CD8-positive, alpha-beta T cell (primary cell): ENCODE measurements at regions of chr2 and their contacts with region 1.

Region 1: DNA sequence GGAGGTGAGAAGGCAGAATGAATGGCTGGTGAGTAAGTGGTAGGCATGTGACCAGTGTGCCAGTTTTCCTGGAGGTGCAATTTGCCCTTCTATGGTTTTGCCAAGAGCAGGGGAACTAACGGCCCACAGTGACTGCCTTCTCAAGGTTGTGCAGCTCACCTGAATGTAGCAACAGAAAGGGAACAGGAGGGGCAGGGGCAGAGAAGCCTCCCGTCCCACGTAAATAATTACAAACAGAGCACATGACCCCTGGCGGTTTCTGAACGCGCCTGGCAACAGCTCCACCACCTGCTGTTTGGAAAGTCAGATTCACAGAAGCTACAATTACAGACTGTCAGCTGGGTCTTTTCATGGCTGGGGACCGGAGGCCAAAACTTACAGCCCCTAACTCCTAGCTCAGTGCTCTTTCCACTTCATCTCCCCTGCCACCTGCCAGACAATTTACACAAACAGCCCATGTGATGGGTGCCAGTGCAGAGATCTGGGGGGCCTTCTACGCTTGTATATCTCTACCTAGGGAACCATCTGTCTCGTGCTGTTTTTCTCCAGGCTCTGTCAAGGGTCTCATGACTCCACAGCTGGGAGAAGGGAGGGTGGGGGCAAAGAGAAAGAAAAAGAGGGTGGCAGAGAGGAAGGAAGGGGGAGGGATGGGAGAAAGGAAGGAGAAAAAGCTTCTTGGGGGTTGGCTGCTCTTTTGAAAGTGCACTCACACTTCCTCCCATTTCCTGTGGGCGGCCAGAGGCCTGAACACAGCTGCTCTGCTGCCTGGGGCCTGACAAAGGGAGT is 69.6 kb downstream of the POLR1A start:
- DNase-seq: peak; percentile 42 to 91 (median 72)
- ATAC-seq: peak; percentile 50
- H3K4me3 ChIP-seq: peak overlapping the region; percentile 4 to 41
- H3K4me3 Mint-ChIP-seq: peak overlapping the region; percentile 79
- H3K27ac ChIP-seq: peak overlapping the region; percentile 87 to 93
- H3K27ac Mint-ChIP-seq: peak overlapping the region; percentile 100
- H3K4me1 ChIP-seq: peaks cover 83% of the 10 kb centered on the region
- H3K4me1 Mint-ChIP-seq: peaks cover 86% of the 10 kb centered on the region
- H3K27me3 ChIP-seq: no peaks in the 10 kb centered on the region
- H3K27me3 Mint-ChIP-seq: no peaks in the 10 kb centered on the region
- CTCF ChIP-seq: peak; percentile 27

Region 2: DNA sequence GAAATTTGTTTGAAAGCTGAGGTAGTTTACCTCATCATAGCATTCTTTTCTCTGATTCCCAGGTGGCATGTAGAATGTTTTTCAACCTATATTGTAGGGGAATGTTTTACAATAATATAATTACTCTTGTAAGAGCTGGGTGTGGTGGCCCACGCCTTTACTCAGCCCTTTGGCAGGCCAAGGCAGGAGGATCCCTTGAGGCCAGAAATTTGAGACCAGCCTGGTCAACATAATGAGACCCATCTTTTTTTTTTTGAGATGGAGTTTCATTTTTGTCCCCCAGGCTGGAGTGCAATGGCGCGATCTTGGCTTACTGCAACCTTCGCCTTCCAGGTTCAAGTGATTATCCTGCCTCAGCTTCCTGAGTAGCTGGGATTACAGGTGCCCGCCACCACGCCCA is 416.5 kb before region 1 on chr2:
- CTCF ChIA-PET with region 1: no interaction called
- POLR2A ChIA-PET with region 1: no interaction called
- intact Hi-C with region 1: loop called in 1 of 2 experiments (anchors 5 kb)
- DNase-seq: no peak
- ATAC-seq: no peak
- H3K4me3 ChIP-seq: no peak overlapping the region
- H3K4me3 Mint-ChIP-seq: no peak overlapping the region
- H3K27ac ChIP-seq: no peak overlapping the region
- H3K27ac Mint-ChIP-seq: no peak overlapping the region
- H3K4me1 ChIP-seq: peaks cover 20% of the 10 kb centered on the region
- H3K4me1 Mint-ChIP-seq: peaks cover 32% of the 10 kb centered on the region
- H3K27me3 ChIP-seq: no peaks in the 10 kb centered on the region
- H3K27me3 Mint-ChIP-seq: no peaks in the 10 kb centered on the region
- CTCF ChIP-seq: no peak

Region 3: DNA sequence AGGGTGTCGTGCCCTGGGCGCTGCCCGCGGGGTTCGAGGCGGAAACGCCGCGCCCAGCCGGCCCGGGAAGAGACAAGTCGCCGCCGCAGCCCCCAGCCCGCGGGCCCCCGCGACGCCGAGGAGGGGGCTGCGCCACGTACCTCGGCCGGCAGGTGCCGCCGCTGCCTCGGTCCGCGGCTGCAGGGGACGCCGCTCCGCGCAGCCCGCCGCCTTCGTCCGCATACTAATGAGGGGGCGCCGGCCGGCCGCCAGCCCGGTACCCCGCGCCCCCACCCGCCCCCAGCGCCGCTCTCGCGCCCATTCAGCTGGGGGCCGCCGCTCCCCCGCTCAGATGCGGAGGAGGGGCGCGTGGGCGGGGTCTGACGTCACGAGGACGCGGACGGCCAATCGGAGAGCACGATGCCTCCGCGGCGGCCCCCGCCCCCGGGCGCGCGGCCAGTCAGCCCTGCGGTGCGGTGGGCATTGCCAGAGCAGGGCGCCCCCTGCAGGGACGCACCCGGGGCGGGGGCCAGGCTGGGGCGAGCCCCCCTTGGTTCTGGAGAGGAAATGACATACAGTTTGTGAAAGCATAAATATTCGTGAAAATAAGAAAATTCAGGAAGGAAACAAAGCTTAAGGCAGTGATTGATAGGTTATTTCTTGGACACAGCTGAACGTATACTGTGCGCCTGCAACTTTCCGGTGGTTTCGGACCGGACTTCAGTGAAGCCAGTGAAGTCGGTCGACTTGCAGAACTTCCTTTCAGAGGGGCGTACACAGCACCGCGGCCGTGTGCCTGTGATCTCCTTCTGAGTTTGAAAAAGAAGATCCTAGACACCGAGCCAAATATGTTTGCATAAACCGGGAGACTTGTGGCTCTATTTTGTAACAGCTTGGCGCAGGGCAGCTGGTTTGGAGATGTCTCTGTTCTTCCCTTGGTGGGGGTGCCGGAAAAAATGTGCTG is 147.1 kb before region 1 on chr2 and contains the start of gene ST3GAL5:
- CTCF ChIA-PET with region 1: interaction called, 66 read pairs
- POLR2A ChIA-PET with region 1: interaction called, 28 read pairs
- intact Hi-C with region 1: loop called (anchors 1 kb)
- DNase-seq: peak; percentile 84 to 98 (median 95)
- ATAC-seq: peak; percentile 85
- H3K4me3 ChIP-seq: peak within 1 kb of the TSS; percentile 89 to 96
- H3K4me3 Mint-ChIP-seq: peak within 1 kb of the TSS; percentile 95
- H3K27ac ChIP-seq: peak within 1 kb of the TSS; percentile 83 to 84
- H3K27ac Mint-ChIP-seq: peak within 1 kb of the TSS; percentile 97
- H3K4me1 ChIP-seq: peaks cover 59% of the 10 kb centered on the region
- H3K4me1 Mint-ChIP-seq: peaks cover 77% of the 10 kb centered on the region
- H3K27me3 ChIP-seq: no peaks in the 10 kb centered on the region
- H3K27me3 Mint-ChIP-seq: no peaks in the 10 kb centered on the region
- CTCF ChIP-seq: peak; percentile 71
- total RNA-seq, gene ST3GAL5: 110 to 115 TPM

Region 4: DNA sequence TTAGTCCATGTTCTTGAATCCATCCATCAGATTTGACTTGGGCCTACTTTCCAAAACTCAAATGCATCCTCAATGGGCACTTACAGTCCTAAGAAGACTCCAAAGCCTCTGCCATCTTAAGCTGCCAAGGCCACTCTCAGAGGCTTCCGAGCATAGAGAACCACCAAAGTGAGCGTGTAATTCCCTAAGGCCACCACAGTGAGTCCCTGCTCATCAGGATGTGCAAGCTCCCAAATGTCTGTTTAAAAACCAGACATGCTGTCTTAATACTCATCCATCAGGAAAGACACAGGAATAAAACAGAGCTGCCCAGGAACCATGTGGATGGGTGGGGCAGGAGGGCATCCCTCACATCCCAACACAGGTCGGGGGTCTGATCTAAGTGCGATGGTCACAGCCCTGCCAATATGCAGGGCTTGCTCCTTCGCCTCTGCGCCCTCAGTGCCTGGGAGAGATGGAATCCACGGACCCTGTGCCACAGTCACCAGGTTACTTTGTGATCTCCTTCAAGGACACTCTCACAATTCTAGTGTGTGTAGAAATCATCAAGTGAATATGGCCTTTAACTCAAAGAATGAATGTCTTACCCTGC is 10.8 kb before region 1 on chr2:
- CTCF ChIA-PET with region 1: interaction called, 13 read pairs
- POLR2A ChIA-PET with region 1: interaction called, 6 read pairs
- intact Hi-C with region 1: no loop called
- DNase-seq: peak in 1 of 9 experiments; percentile 30
- ATAC-seq: peak; percentile 31
- H3K4me3 ChIP-seq: no peak overlapping the region
- H3K4me3 Mint-ChIP-seq: no peak overlapping the region
- H3K27ac ChIP-seq: no peak overlapping the region
- H3K27ac Mint-ChIP-seq: peak overlapping the region; percentile 52
- H3K4me1 ChIP-seq: no peaks in the 10 kb centered on the region
- H3K4me1 Mint-ChIP-seq: no peaks in the 10 kb centered on the region
- H3K27me3 ChIP-seq: no peaks in the 10 kb centered on the region
- H3K27me3 Mint-ChIP-seq: no peaks in the 10 kb centered on the region
- CTCF ChIP-seq: no peak

Region 5: DNA sequence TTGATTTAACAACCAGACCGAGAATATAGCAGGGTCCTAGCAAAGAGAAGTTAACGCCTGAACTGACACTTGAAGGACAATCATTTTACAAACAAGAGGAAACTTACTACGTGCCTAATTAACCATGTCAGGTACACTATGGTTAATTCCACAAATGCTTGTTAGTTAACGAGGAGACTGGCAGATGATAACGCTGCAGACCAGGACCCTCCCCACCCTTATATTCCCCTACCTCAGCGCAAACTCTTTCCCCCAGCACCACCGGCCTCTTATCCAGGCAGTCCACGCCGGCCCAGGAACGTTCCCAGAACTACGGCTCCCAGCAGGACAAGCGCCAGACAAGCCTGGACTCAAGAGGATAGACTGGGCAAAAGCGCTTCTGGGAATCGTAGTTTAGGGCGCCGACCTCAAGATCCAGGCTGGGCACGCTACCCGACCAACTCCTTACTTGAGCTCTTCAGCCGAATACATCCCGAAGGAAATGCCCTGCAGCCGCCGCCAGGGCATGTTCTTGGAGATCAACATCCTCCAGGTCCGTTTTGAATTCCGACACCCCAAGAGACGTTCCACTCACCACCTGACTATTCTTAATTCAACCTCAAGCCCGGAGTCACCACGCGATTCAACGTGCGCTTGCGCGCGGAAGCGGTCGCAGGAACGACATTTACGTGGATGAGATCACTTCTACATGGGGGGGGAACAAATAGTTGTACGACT is 69.3 kb after region 1 on chr2 and contains the start of gene POLR1A:
- CTCF ChIA-PET with region 1: no interaction called
- POLR2A ChIA-PET with region 1: interaction called, 6 read pairs
- intact Hi-C with region 1: loop called in 1 of 2 experiments (anchors 2 kb)
- DNase-seq: peak; percentile 64 to 94 (median 83)
- ATAC-seq: peak; percentile 77
- H3K4me3 ChIP-seq: peak within 1 kb of the TSS; percentile 66 to 92
- H3K4me3 Mint-ChIP-seq: peak within 1 kb of the TSS; percentile 92
- H3K27ac ChIP-seq: peak within 1 kb of the TSS; percentile 80 to 87
- H3K27ac Mint-ChIP-seq: peak within 1 kb of the TSS; percentile 99
- H3K4me1 ChIP-seq: peaks cover 24% of the 10 kb centered on the region
- H3K4me1 Mint-ChIP-seq: peaks cover 66% of the 10 kb centered on the region
- H3K27me3 ChIP-seq: no peaks in the 10 kb centered on the region
- H3K27me3 Mint-ChIP-seq: no peaks in the 10 kb centered on the region
- CTCF ChIP-seq: no peak
- total RNA-seq, gene POLR1A: 12.3 to 15.2 TPM

Region 6: DNA sequence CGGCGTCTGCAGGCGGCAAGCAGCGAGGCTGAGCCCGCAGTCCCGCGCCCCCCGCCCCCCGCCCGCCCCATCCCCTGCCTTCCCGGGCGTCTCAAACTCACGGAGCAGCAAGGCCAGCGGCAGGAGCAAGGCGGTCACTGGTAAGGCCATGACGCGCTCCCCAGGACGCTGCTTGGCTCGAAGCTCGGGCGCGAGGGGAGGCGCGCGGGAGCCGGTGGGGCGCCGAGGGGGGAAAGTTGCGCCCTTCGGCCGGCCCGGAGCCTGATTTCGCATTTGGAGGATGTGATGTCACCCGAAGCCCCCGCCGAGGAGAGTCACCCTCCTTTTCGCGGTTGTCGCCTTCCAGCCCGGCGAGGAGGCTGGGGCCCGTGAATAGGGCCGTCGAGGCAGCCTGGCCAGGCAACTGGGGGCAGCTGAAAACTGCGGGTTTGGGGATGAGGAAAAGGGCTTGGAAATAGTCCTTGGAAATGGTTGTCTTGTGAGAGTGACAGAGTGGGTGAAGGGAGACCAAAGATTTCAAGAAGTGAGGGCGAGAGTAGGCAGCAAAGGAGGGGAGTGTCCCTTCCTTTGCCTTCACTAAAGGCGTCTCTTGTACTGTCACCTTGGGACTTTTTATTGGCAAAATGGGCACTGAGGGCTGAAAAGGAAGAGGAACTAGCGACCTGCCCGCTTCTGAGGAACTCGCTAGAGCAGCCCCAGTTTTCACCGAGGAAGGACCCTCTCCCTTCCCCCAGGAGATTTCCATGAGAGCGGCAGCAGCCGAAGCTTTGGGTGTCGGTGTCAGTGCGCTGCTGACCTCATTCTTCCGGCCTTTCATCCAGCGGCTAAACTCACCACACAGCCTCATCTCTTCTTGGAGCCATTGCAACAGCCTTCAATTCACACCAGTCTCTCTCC is 754.8 kb after region 1 on chr2 and contains the start of gene CD8A:
- CTCF ChIA-PET with region 1: no interaction called
- POLR2A ChIA-PET with region 1: no interaction called
- intact Hi-C with region 1: loop called in 1 of 2 experiments (anchors 10 kb)
- DNase-seq: peak; percentile 60 to 93 (median 82)
- ATAC-seq: peak; percentile 23
- H3K4me3 ChIP-seq: peak within 1 kb of the TSS; percentile 93 to 98
- H3K4me3 Mint-ChIP-seq: peak within 1 kb of the TSS; percentile 95
- H3K27ac ChIP-seq: peak within 1 kb of the TSS; percentile 95 to 99
- H3K27ac Mint-ChIP-seq: peak within 1 kb of the TSS; percentile 99
- H3K4me1 ChIP-seq: peaks cover 69% of the 10 kb centered on the region
- H3K4me1 Mint-ChIP-seq: peaks cover 73% of the 10 kb centered on the region
- H3K27me3 ChIP-seq: no peaks in the 10 kb centered on the region
- H3K27me3 Mint-ChIP-seq: no peaks in the 10 kb centered on the region
- CTCF ChIP-seq: no peak
- total RNA-seq, gene CD8A: 502 to 503 TPM